ENCODE measurements at regions of chr1 and their contacts with region 1.

Region 1: DNA sequence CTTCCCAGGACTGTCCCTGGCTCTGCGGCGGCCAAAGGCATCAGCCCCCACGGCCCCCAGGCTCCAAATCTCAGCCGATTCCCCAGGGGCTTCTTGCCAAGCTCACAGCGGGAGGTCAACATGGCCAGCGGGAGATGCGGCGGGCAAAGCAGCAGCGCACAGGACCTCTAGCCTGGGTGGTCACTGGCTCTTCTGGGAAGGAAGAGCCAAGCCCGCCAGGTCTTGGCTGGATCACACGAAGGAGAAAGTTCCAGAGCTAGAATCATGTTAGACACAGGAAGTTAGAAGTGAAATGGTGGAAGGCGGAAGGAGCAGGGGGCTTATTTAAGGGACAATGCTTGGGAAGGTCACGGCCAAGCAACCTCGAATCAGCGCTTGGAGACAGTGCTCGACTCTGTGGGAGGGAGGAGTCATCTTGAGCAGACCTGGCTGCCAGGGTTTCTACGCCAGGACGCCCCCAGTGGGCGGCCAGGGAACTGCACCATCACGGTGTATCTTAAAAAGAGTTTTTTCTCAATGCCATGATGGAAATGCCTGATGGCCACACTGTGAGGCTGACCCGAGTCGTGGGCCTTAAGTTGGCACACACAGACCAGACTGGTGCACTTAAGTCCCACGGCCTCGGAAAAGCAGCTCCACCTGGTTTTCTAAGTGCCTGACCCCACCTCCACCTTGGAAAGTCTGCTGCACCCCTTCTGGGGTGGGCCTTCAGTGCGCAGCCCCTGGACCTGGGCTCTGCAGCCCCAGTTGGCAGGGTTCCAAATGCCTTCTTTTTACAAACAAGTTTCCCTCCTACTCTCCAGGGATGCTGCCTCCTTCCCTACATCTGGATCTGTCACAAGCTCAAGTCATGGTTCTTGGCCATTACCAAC is 29.3 kb downstream of the SLC66A1 start:
- DNase-seq: peak; percentile 72
- H3K4me3 ChIP-seq: no peak overlapping the region
- H3K27ac ChIP-seq: no peak overlapping the region
- H3K4me1 ChIP-seq: peaks cover 4% of the 10 kb centered on the region
- H3K27me3 ChIP-seq: no peaks in the 10 kb centered on the region
- CTCF ChIP-seq: peak; percentile 91 to 92
- POLR2A ChIP-seq: no peak

Region 2: GRCh38 chr1:19251305-19252196 is 89.9 kb before region 1 on chr1 and contains the starts of genes EMC1 and MRTO4:
- CTCF ChIA-PET with region 1: interaction called, 4 read pairs
- POLR2A ChIA-PET with region 1: no interaction called
- dilution Hi-C with region 1: no loop called
- intact Hi-C with region 1: loop called (anchors 5 kb)
- DNase-seq: peak; percentile 89
- H3K4me3 ChIP-seq: peak within 1 kb of the TSS; percentile 59 to 81 (median 78)
- H3K27ac ChIP-seq: peak within 1 kb of the TSS; percentile 54
- H3K4me1 ChIP-seq: peaks cover 18% of the 10 kb centered on the region
- H3K27me3 ChIP-seq: no peaks in the 10 kb centered on the region
- CTCF ChIP-seq: no peak
- POLR2A ChIP-seq: peak; percentile 91
- total RNA-seq, gene EMC1: 77.5 and 84.8 TPM in 2 replicates
- total RNA-seq, gene MRTO4: 47.7 and 49.4 TPM in 2 replicates

Region 3: GRCh38 chr1:19273106-19273843 is 68.2 kb before region 1 on chr1:
- CTCF ChIA-PET with region 1: no interaction called
- POLR2A ChIA-PET with region 1: no interaction called
- dilution Hi-C with region 1: no loop called
- intact Hi-C with region 1: loop called (anchors 2 kb)
- DNase-seq: no peak
- H3K4me3 ChIP-seq: no peak overlapping the region
- H3K27ac ChIP-seq: no peak overlapping the region
- H3K4me1 ChIP-seq: no peaks in the 10 kb centered on the region
- H3K27me3 ChIP-seq: peaks cover 2 to 7% of the 10 kb centered on the region in 2 experiments
- CTCF ChIP-seq: no peak
- POLR2A ChIP-seq: no peak

Region 4: GRCh38 chr1:19311959-19312781 is 29.3 kb before region 1 on chr1 and contains the starts of genes AKR7A2 and SLC66A1:
- CTCF ChIA-PET with region 1: interaction called, 4 read pairs
- POLR2A ChIA-PET with region 1: no interaction called
- dilution Hi-C with region 1: no loop called
- intact Hi-C with region 1: loop called (anchors 1 kb)
- DNase-seq: peak; percentile 96
- H3K4me3 ChIP-seq: peak within 1 kb of the TSS; percentile 57 to 87 (median 69)
- H3K27ac ChIP-seq: peak within 1 kb of the TSS; percentile 84
- H3K4me1 ChIP-seq: peaks cover 21% of the 10 kb centered on the region
- H3K27me3 ChIP-seq: no peaks in the 10 kb centered on the region
- CTCF ChIP-seq: peak in 1 of 2 donors; percentile 3
- POLR2A ChIP-seq: peak; percentile 91
- total RNA-seq, gene AKR7A2: 45.2 and 48.0 TPM in 2 replicates
- total RNA-seq, gene SLC66A1: 15.3 and 17.6 TPM in 2 replicates

Region 5: GRCh38 chr1:19384113-19384512 is 42.7 kb after region 1 on chr1:
- CTCF ChIA-PET with region 1: interaction called, 3 read pairs
- POLR2A ChIA-PET with region 1: no interaction called
- dilution Hi-C with region 1: no loop called
- intact Hi-C with region 1: loop called (anchors 1 kb)
- DNase-seq: no peak
- H3K4me3 ChIP-seq: no peak overlapping the region
- H3K27ac ChIP-seq: no peak overlapping the region
- H3K4me1 ChIP-seq: peaks cover 21% of the 10 kb centered on the region
- H3K27me3 ChIP-seq: no peaks in the 10 kb centered on the region
- CTCF ChIP-seq: no peak
- POLR2A ChIP-seq: no peak

Region 6: GRCh38 chr1:19582302-19582701 is 240.9 kb after region 1 on chr1:
- CTCF ChIA-PET with region 1: interaction called, 5 read pairs
- POLR2A ChIA-PET with region 1: no interaction called
- dilution Hi-C with region 1: no loop called
- intact Hi-C with region 1: loop called (anchors 1 kb)
- DNase-seq: peak; percentile 44
- H3K4me3 ChIP-seq: no peak overlapping the region
- H3K27ac ChIP-seq: no peak overlapping the region
- H3K4me1 ChIP-seq: no peaks in the 10 kb centered on the region
- H3K27me3 ChIP-seq: peaks cover 2 to 5% of the 10 kb centered on the region in 2 experiments
- CTCF ChIP-seq: peak; percentile 65 to 72
- POLR2A ChIP-seq: no peak